Heart right ventricle (tissue), 16 donors: ENCODE measurements at regions of chr7 and their contacts with region 1.

Region 1: GRCh38 chr7:132049462-132050304 is 493.3 kb upstream of the PODXL start:
- DNase-seq: no peak
- ATAC-seq: no peak
- H3K4me3 ChIP-seq: no peak overlapping the region
- H3K27ac ChIP-seq: no peak overlapping the region
- H3K4me1 ChIP-seq: no peaks in the 10 kb centered on the region
- H3K27me3 ChIP-seq: peaks cover 0 to 5% (median 0%) of the 10 kb centered on the region in 7 donors
- CTCF ChIP-seq: peak; percentile 37 to 69 (median 65)

Region 2: GRCh38 chr7:131688738-131689661 is 360.7 kb before region 1 on chr7:
- intact Hi-C with region 1: loop called in 5 of 10 experiments (anchors 5 to 10 kb)
- DNase-seq: peak; percentile 58 to 60
- ATAC-seq: peak; percentile 54 to 85 (median 66)
- H3K4me3 ChIP-seq: no peak overlapping the region
- H3K27ac ChIP-seq: no peak overlapping the region
- H3K4me1 ChIP-seq: peaks cover 0 to 12% (median 6%) of the 10 kb centered on the region in 9 donors
- H3K27me3 ChIP-seq: peaks cover 5 to 57% (median 34%) of the 10 kb centered on the region in 7 donors
- CTCF ChIP-seq: peak; percentile 91 to 97 (median 93)

Region 3: DNA sequence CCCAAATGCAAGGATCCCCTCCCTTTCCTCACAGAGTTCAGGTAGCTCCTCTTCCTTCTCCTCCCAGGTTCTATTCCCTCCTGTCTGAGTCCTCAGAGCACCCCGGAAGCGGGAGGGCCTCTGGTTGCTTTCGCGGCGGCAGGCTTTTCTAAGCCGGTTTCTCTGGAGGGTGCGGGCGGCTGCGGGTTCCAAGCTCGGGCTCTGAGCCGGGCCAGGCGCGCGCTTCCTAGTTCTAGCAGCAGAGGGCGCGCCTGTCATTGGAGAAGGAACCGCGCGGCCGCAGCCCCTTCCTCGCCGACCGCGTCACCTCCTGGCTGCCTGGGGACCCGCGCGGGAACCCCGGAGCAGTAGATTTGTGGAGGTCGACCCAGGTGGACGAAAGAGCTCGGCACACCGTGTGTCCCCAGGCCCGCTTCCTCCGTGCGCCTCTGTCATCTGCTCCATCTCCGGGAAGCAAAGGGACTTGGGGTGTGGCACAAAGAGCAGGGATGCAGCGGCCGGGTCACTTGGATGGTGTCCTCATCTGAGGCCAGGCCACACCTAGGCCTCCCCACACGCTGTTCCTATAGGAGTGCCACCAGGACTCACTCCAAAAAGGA is 104.3 kb before region 1 on chr7:
- intact Hi-C with region 1: loop called in 2 of 10 experiments (anchors 5 to 10 kb)
- DNase-seq: peak; percentile 9 to 47
- ATAC-seq: peak; percentile 41 to 82 (median 65)
- H3K4me3 ChIP-seq: peak overlapping the region in 6 of 10 donors; percentile 25 to 40 (median 30)
- H3K27ac ChIP-seq: no peak overlapping the region
- H3K4me1 ChIP-seq: peaks cover 0 to 18% (median 8%) of the 10 kb centered on the region in 9 donors
- H3K27me3 ChIP-seq: peaks cover 0 to 65% (median 41%) of the 10 kb centered on the region in 7 donors
- CTCF ChIP-seq: peak; percentile 65 to 91 (median 89)

Region 4: GRCh38 chr7:132437730-132438129 is 388.0 kb after region 1 on chr7:
- intact Hi-C with region 1: no loop called
- DNase-seq: peak in 1 of 2 donors; percentile 28
- ATAC-seq: peak in 7 of 8 donors; percentile 13 to 66 (median 34)
- H3K4me3 ChIP-seq: no peak overlapping the region
- H3K27ac ChIP-seq: no peak overlapping the region
- H3K4me1 ChIP-seq: peaks cover 0 to 57% (median 35%) of the 10 kb centered on the region in 9 donors
- H3K27me3 ChIP-seq: no peaks in the 10 kb centered on the region
- CTCF ChIP-seq: no peak